Activated CD8-positive, alpha-beta T cell treated with anti-CD3 and anti-CD28 coated beads, Interleukin-2, amount 10 ng/mL, durations not matched to agents 7 days and 5 days (primary cell): ENCODE measurements at regions of chr20 and their contacts with region 1.

Region 1: GRCh38 chr20:18466894-18467730 is at the starts of genes DZANK1 and POLR3F:
- DNase-seq: peak; percentile 94
- ATAC-seq: peak; percentile 98
- H3K4me3 Mint-ChIP-seq: peak within 1 kb of the TSS; percentile 96
- H3K27ac Mint-ChIP-seq: peak within 1 kb of the TSS; percentile 89
- H3K4me1 Mint-ChIP-seq: peaks cover 27% of the 10 kb centered on the region
- H3K27me3 Mint-ChIP-seq: no peaks in the 10 kb centered on the region
- total RNA-seq, gene DZANK1: 1.4 to 1.6 TPM
- total RNA-seq, gene POLR3F: 8.3 to 8.4 TPM

Region 2: GRCh38 chr20:18496740-18497592 is 29.9 kb after region 1 on chr20 and contains the start of gene RBBP9:
- CTCF ChIA-PET with region 1: interaction called, 9 read pairs
- POLR2A ChIA-PET with region 1: interaction called, 25 read pairs
- DNase-seq: peak; percentile 81
- ATAC-seq: peak; percentile 100
- H3K4me3 Mint-ChIP-seq: peak within 1 kb of the TSS; percentile 95
- H3K27ac Mint-ChIP-seq: peak within 1 kb of the TSS; percentile 83
- H3K4me1 Mint-ChIP-seq: peaks cover 22% of the 10 kb centered on the region
- H3K27me3 Mint-ChIP-seq: no peaks in the 10 kb centered on the region
- total RNA-seq, gene RBBP9: 10.6 to 10.8 TPM

Region 3: GRCh38 chr20:18596270-18596669 is 129.2 kb after region 1 on chr20:
- CTCF ChIA-PET with region 1: no interaction called
- POLR2A ChIA-PET with region 1: no interaction called
- DNase-seq: no peak
- ATAC-seq: no peak
- H3K4me3 Mint-ChIP-seq: no peak overlapping the region
- H3K27ac Mint-ChIP-seq: no peak overlapping the region
- H3K4me1 Mint-ChIP-seq: no peaks in the 10 kb centered on the region
- H3K27me3 Mint-ChIP-seq: no peaks in the 10 kb centered on the region